ENCODE measurements at regions of chr11 and their contacts with region 1.

Region 1: DNA sequence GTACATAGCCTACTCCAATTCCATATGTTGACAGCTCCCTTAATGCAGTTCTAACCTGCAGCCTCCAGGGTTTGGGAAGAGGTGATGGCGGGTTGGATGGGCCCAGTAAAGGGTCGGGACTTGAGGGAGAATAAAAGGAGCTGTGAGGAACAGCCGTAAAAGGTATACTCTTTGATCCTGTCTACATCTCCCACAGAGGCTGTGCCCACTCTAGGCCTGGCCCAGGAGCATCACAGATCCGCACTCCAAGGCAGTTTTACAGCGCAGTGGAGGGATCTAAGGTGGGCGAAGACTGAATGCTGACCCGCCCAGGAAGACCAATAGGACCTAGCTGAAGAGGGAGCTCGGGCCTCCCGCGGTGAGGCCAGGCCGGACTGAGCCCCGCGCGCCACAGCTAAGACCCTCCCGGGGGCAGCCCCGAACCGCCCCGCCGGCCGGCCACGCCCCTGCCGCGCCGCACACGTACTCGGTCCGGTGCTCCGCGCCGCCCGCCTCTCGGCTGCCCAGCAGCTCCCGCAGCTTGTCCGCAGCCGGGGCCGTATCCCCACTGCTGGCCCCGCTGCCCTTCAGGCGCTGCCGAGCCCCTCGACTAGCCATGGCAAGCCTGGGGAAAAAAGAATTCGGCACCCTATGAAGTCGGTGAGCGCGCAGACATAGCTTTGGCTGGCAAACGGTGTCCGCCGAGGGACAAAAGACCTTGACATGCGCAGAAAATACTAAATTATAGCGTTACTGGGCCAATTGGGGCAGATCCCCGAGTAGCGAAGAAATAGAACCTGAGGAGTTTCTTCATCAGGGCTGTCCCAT is at the start of gene ALG9:
- DNase-seq: peak; percentile 84 to 89
- H3K4me3 ChIP-seq: peak within 1 kb of the TSS; percentile 66 to 98
- H3K27ac ChIP-seq: peak within 1 kb of the TSS; percentile 85 to 98
- H3K4me1 ChIP-seq: peaks cover 0 to 20% (median 7%) of the 10 kb centered on the region in 4 donors
- H3K27me3 ChIP-seq: no peaks in the 10 kb centered on the region
- CTCF ChIP-seq: peak; percentile 20 to 27

Region 2: DNA sequence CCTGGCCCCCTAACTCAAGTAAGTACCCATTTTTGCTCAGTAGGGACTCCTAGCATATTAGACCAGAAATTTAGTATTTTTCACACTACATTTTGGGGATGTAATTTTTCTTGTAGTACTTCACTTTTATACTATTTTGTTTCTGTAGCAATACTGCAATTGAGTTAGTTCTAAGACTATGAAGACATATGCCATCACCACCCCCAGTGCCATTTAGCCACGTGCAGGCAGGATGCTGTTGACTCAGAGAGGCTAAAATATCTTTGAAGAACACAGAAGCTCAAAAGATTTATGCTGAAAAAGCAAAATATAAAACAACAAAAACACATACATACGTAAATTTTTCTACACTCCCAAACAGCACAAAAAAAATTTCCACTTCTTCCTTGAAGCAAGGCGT is 125.0 kb after region 1 on chr11:
- intact Hi-C with region 1: loop called (anchors 5 kb)
- DNase-seq: no peak
- H3K4me3 ChIP-seq: no peak overlapping the region
- H3K27ac ChIP-seq: no peak overlapping the region
- H3K4me1 ChIP-seq: no peaks in the 10 kb centered on the region
- H3K27me3 ChIP-seq: no peaks in the 10 kb centered on the region
- CTCF ChIP-seq: no peak

Measured in tibial artery (tissue), 4 donors.